Lower leg skin (tissue), 4 donors: ENCODE measurements at regions of chr2 and their contacts with region 1.

Region 1: DNA sequence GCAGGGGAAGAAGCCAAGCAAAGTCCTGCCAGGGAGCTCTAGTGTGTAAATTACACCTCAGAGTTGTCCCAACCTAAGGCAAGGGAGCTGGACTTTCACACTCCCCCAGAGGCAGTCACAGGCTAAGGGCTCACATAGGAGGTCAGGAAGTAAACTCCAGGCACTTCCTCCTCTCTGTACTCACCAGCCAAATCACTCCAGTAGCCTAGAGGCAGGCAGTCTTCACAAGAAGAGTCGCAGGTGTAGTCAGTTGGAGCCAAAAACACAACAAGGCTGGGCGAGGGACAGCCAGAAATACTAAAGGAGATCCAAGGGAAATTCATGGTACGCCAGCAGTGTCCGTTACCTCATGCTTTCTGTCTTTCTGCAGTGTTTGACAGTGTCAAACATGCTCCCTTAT is 205.0 kb downstream of the C1D start:
- DNase-seq: no peak
- H3K4me3 ChIP-seq: no peak overlapping the region
- CTCF ChIP-seq: no peak
- POLR2A ChIP-seq: no peak

Region 2: GRCh38 chr2:67812682-67813081 is 45.2 kb before region 1 on chr2:
- intact Hi-C with region 1: loop called (anchors 1 kb)
- DNase-seq: no peak
- H3K4me3 ChIP-seq: no peak overlapping the region
- CTCF ChIP-seq: no peak
- POLR2A ChIP-seq: no peak